ENCODE measurements at regions of chr14 and their contacts with region 1.

Region 1: GRCh38 chr14:90399541-90400444 is 3.0 kb downstream of the CALM1 start:
- DNase-seq: peak; percentile 72 to 94
- ATAC-seq: peak; percentile 50 to 78 (median 52)
- H3K4me3 ChIP-seq: peak overlapping the region; percentile 56
- H3K4me3 Mint-ChIP-seq: peak overlapping the region; percentile 91
- H3K27ac ChIP-seq: peak overlapping the region; percentile 94
- H3K27ac Mint-ChIP-seq: peak overlapping the region; percentile 95 to 96
- H3K4me1 ChIP-seq: peaks cover 47% of the 10 kb centered on the region
- H3K4me1 Mint-ChIP-seq: peaks cover 63 to 66% of the 10 kb centered on the region in 2 donors
- H3K27me3 ChIP-seq: no peaks in the 10 kb centered on the region
- H3K27me3 Mint-ChIP-seq: no peaks in the 10 kb centered on the region
- CTCF ChIP-seq: peak; percentile 100

Region 2: GRCh38 chr14:89954070-89955028 is 445.4 kb before region 1 on chr14 and contains the start of gene EFCAB11:
- intact Hi-C with region 1: loop called (anchors 5 kb)
- DNase-seq: peak; percentile 93 to 98
- ATAC-seq: peak; percentile 77 to 92 (median 78)
- H3K4me3 ChIP-seq: peak within 1 kb of the TSS; percentile 59
- H3K4me3 Mint-ChIP-seq: peak within 1 kb of the TSS; percentile 99
- H3K27ac ChIP-seq: peak within 1 kb of the TSS; percentile 98
- H3K27ac Mint-ChIP-seq: peak within 1 kb of the TSS; percentile 97
- H3K4me1 ChIP-seq: peaks cover 24% of the 10 kb centered on the region
- H3K4me1 Mint-ChIP-seq: peaks cover 40 to 46% of the 10 kb centered on the region in 2 donors
- H3K27me3 ChIP-seq: no peaks in the 10 kb centered on the region
- H3K27me3 Mint-ChIP-seq: no peaks in the 10 kb centered on the region
- CTCF ChIP-seq: no peak
- total RNA-seq, gene EFCAB11: 3.9 to 5.2 (median 4.0) TPM

Region 3: DNA sequence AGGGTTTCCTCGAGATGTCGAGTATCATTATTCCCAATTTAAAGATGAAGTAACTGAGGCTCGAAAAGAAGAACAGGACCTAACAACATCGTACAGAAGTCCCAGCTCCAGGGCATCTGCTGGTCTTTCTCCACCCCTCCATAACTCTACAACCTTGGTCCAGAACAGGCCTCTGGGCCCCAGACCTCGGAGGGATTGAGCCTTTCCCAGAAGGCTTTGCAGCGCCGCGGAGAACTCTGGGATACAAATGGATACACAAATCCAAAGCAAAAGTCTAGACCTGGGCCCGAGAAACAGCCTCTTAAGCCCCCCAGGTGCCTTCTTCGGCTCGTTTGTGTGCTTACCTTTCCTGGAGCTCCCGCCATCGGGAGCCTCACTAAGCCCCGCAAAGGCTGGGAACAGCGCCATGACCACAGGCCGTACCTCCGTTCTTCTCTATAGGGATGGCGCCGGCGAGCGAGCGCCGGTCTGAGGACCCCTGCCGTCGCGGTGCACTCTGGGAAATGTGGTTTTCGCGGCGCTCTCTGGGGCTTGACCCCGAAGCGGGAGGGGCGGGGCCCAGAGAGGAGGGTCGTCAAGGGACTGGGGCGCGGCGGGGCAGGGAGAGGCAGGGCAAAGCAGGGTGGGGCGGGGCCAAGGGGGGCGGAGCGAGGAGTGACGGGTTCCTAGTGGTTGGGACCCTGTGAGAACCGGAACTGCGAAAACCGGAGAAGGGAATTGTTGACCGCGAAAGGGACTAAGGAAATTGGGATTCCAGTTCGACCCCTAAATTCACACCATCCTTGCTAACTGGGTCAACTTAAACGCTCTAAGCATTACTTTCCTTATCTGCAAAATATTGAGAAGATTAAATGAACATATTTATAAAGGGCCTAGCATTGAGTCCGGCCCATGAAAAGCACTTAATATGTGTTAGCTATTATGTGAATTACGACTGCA is 68.0 kb before region 1 on chr14 and contains the start of gene NRDE2:
- intact Hi-C with region 1: loop called (anchors 5 kb)
- DNase-seq: peak; percentile 75 to 94
- ATAC-seq: peak; percentile 93 to 96 (median 95)
- H3K4me3 ChIP-seq: peak within 1 kb of the TSS; percentile 83
- H3K4me3 Mint-ChIP-seq: peak within 1 kb of the TSS; percentile 92
- H3K27ac ChIP-seq: peak within 1 kb of the TSS; percentile 82
- H3K27ac Mint-ChIP-seq: peak within 1 kb of the TSS; percentile 91 to 94
- H3K4me1 ChIP-seq: peaks cover 9% of the 10 kb centered on the region
- H3K4me1 Mint-ChIP-seq: peaks cover 27 to 35% of the 10 kb centered on the region in 2 donors
- H3K27me3 ChIP-seq: no peaks in the 10 kb centered on the region
- H3K27me3 Mint-ChIP-seq: peaks cover 10 to 25% of the 10 kb centered on the region in 2 donors
- CTCF ChIP-seq: no peak
- total RNA-seq, gene NRDE2: 32.6 to 46.3 (median 40.7) TPM

Region 4: GRCh38 chr14:90361865-90362557 is 37.8 kb before region 1 on chr14:
- intact Hi-C with region 1: no loop called
- DNase-seq: no peak
- ATAC-seq: no peak
- H3K4me3 ChIP-seq: no peak overlapping the region
- H3K4me3 Mint-ChIP-seq: no peak overlapping the region
- H3K27ac ChIP-seq: no peak overlapping the region
- H3K27ac Mint-ChIP-seq: no peak overlapping the region
- H3K4me1 ChIP-seq: no peaks in the 10 kb centered on the region
- H3K4me1 Mint-ChIP-seq: no peaks in the 10 kb centered on the region
- H3K27me3 ChIP-seq: no peaks in the 10 kb centered on the region
- H3K27me3 Mint-ChIP-seq: peaks cover 16 to 21% of the 10 kb centered on the region in 2 donors
- CTCF ChIP-seq: no peak

Region 5: DNA sequence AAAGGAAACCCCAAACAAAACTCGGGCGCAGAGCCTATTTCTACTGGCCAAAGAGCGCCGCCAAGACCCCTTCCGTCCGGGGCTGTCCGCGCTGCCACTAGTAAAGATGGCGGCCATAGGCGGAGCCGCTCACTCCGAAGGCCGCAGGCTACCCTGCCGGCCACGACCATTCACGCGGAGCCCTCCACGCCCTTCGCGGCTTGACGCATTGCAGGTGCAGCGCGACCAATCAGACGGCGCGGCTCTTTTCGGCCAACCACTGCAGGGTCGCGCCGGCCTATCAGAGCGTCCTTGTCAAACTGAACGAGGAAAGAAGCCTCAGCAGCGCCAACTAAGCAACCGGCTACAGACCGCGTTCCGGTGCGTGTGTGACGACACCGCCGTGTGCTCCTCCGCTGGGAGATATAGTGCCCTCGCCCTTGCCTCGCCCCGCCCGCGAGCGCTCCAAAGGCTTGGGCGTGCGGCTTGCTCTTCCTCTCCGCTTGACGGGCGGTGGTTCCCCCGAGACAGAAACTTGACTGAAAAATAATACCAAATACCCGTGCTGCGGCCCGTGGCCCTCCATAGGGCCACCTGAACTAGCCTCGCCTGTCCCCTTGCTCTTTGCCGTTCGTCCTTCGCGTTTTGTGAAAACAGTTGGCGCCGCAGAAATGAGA is 16.6 kb before region 1 on chr14:
- intact Hi-C with region 1: loop called (anchors 1 kb)
- DNase-seq: peak; percentile 96 to 98
- ATAC-seq: peak; percentile 84 to 94 (median 88)
- H3K4me3 ChIP-seq: peak overlapping the region; percentile 80
- H3K4me3 Mint-ChIP-seq: no peak overlapping the region
- H3K27ac ChIP-seq: peak overlapping the region; percentile 96
- H3K27ac Mint-ChIP-seq: no peak overlapping the region
- H3K4me1 ChIP-seq: peaks cover 25% of the 10 kb centered on the region
- H3K4me1 Mint-ChIP-seq: no peaks in the 10 kb centered on the region
- H3K27me3 ChIP-seq: no peaks in the 10 kb centered on the region
- H3K27me3 Mint-ChIP-seq: no peaks in the 10 kb centered on the region
- CTCF ChIP-seq: no peak

Region 6: DNA sequence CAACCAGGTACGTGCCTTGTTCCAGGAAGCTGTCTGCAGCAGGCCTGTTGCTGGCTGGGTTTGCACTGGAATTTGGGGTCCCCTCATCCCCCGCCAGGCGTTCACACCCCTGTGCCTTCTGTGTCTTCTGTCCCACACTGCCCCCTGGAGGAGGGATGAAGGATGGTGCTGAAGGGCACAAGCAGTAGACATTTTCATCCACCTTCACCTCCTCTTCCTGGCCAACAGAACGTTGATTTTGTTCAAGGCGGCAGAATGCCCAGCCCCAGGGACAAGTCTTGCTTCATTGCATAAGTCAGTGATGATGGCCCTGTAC is 119.1 kb after region 1 on chr14:
- intact Hi-C with region 1: loop called (anchors 1 kb)
- DNase-seq: peak in 1 of 2 donors; percentile 76
- ATAC-seq: peak in 2 of 3 donors; percentile 54 to 72
- H3K4me3 ChIP-seq: no peak overlapping the region
- H3K4me3 Mint-ChIP-seq: no peak overlapping the region
- H3K27ac ChIP-seq: no peak overlapping the region
- H3K27ac Mint-ChIP-seq: no peak overlapping the region
- H3K4me1 ChIP-seq: no peaks in the 10 kb centered on the region
- H3K4me1 Mint-ChIP-seq: no peaks in the 10 kb centered on the region
- H3K27me3 ChIP-seq: no peaks in the 10 kb centered on the region
- H3K27me3 Mint-ChIP-seq: no peaks in the 10 kb centered on the region
- CTCF ChIP-seq: peak; percentile 56

Region 7: DNA sequence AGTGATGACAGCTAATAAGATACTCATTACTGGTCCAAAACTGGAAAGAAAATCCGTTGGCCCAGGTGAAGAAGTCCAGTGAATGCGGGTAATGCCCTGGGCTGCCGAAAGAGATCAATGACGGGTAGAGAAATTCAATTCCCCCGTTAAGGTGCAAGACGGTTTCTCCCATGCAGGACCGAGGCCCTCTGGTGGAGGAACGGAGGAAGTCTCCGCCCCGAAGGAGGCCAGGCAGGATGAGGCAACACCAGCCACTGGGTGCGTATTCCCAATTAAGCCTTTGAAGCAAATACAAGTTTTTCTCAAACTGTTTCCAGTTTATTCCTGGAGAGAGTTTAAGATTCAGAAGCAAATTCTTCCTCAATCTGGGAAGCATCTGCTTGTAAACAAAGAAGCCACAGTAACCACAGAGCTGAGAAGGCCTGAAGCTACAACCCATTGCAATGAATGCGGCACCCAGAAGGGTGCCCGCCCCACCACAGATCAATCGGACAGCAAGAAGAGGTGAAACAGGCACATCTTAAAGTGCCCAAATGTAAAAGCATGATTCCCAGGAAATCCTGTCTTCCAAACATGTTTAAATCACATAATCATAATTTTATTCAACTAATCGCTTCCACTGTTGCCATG is 297.9 kb after region 1 on chr14:
- intact Hi-C with region 1: loop called (anchors 10 kb)
- DNase-seq: peak; percentile 54 to 83
- ATAC-seq: peak; percentile 82 to 92 (median 84)
- H3K4me3 ChIP-seq: no peak overlapping the region
- H3K4me3 Mint-ChIP-seq: no peak overlapping the region
- H3K27ac ChIP-seq: no peak overlapping the region
- H3K27ac Mint-ChIP-seq: no peak overlapping the region
- H3K4me1 ChIP-seq: no peaks in the 10 kb centered on the region
- H3K4me1 Mint-ChIP-seq: peaks cover 0 to 4% of the 10 kb centered on the region in 2 donors
- H3K27me3 ChIP-seq: no peaks in the 10 kb centered on the region
- H3K27me3 Mint-ChIP-seq: peaks cover 4 to 5% of the 10 kb centered on the region in 2 donors
- CTCF ChIP-seq: peak; percentile 71

Region 8: DNA sequence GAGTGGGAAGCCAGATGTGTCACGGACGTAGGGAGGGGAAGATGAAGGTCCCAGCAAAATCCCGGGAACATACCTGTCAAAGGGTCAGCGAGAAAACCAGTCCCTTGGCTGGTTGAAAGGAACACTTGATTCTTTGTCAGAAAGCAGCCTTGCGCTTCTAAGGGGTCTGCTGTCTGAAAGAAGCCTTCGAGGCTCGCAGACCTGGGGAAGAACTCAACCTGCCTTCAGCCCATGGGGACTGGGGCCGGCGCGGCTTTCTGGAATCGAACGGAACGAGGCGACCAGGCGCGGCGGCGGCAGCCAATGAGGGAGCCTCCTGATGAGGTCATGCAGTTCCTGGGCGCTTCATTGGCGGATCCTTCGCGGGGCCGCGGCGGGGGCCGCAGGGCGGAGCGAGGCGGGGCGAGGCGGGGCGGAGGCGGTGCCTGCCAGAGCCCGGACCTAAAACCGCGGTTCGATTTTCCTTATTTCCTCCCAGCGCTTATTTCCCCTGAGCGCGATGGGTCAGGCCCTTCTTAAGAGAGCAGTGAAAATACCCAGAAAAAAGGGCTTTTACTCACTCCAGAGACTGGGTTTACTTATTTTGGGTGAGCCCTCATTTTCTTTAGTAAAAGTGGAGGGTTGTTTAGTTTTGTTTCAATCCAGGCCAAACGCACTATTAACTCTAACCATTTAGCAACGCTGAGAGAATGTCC is 428.3 kb after region 1 on chr14:
- intact Hi-C with region 1: loop called (anchors 10 kb)
- DNase-seq: peak; percentile 92
- ATAC-seq: peak; percentile 97 to 99 (median 98)
- H3K4me3 ChIP-seq: peak overlapping the region; percentile 39
- H3K4me3 Mint-ChIP-seq: peak overlapping the region; percentile 85
- H3K27ac ChIP-seq: peak overlapping the region; percentile 90
- H3K27ac Mint-ChIP-seq: peak overlapping the region; percentile 93
- H3K4me1 ChIP-seq: peaks cover 17% of the 10 kb centered on the region
- H3K4me1 Mint-ChIP-seq: peaks cover 17 to 24% of the 10 kb centered on the region in 2 donors
- H3K27me3 ChIP-seq: no peaks in the 10 kb centered on the region
- H3K27me3 Mint-ChIP-seq: no peaks in the 10 kb centered on the region
- CTCF ChIP-seq: no peak

Measured in natural killer cell (primary cell).